Sciatic nerve (tissue), 2 donors: ENCODE measurements at regions of chr5 and their contacts with region 1.

Region 1: DNA sequence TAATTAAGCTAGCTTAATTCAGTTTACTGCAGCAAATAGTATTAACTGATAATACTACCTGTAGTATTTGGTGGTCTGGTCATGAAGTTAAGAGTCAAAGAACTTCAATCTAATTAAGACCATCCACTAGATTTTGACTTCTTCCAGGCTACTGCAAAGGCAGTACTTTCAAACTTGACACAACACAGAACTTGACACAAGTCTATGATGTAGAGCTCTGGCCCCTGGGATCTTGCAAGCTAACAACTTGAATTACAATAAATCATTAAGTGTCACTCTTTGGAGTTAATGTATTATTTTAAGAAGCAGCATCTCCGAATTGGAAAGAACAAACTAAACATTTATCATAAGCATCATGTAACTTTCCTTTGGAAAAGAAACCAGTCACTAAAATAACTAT is 40.9 kb downstream of the UIMC1 start:
- DNase-seq: no peak
- ATAC-seq: no peak

Region 2: GRCh38 chr5:176675675-176676360 is 289.8 kb before region 1 on chr5:
- intact Hi-C with region 1: loop called (anchors 10 kb)
- DNase-seq: no peak
- ATAC-seq: no peak

Region 3: GRCh38 chr5:177146891-177147638 is 181.4 kb after region 1 on chr5:
- intact Hi-C with region 1: no loop called
- DNase-seq: no peak
- ATAC-seq: no peak